B cell (primary cell): ENCODE measurements at regions of chr9 and their contacts with region 1.

Region 1: GRCh38 chr9:38634315-38634714 is 13.9 kb upstream of the ANKRD18A start:
- DNase-seq: no peak
- ATAC-seq: no peak
- H3K4me3 ChIP-seq: no peak overlapping the region
- H3K4me3 Mint-ChIP-seq: no peak overlapping the region
- H3K27ac ChIP-seq: no peak overlapping the region
- H3K27ac Mint-ChIP-seq: no peak overlapping the region
- H3K4me1 ChIP-seq: no peaks in the 10 kb centered on the region
- H3K4me1 Mint-ChIP-seq: no peaks in the 10 kb centered on the region
- H3K27me3 ChIP-seq: no peaks in the 10 kb centered on the region
- H3K27me3 Mint-ChIP-seq: peaks cover 8% of the 10 kb centered on the region
- CTCF ChIP-seq: no peak

Region 2: GRCh38 chr9:38651400-38652042 is 17.2 kb after region 1 on chr9:
- CTCF ChIA-PET with region 1: no interaction called
- POLR2A ChIA-PET with region 1: no interaction called
- intact Hi-C with region 1: loop called (anchors 2 kb)
- DNase-seq: no peak
- ATAC-seq: no peak
- H3K4me3 ChIP-seq: no peak overlapping the region
- H3K4me3 Mint-ChIP-seq: no peak overlapping the region
- H3K27ac ChIP-seq: no peak overlapping the region
- H3K27ac Mint-ChIP-seq: no peak overlapping the region
- H3K4me1 ChIP-seq: no peaks in the 10 kb centered on the region
- H3K4me1 Mint-ChIP-seq: peaks cover 7% of the 10 kb centered on the region
- H3K27me3 ChIP-seq: peaks cover 0 to 4% (median 1%) of the 10 kb centered on the region in 4 experiments
- H3K27me3 Mint-ChIP-seq: peaks cover 24% of the 10 kb centered on the region
- CTCF ChIP-seq: no peak